H1 (cell line): ENCODE measurements at regions of chr16 and their contacts with region 1.

Region 1: DNA sequence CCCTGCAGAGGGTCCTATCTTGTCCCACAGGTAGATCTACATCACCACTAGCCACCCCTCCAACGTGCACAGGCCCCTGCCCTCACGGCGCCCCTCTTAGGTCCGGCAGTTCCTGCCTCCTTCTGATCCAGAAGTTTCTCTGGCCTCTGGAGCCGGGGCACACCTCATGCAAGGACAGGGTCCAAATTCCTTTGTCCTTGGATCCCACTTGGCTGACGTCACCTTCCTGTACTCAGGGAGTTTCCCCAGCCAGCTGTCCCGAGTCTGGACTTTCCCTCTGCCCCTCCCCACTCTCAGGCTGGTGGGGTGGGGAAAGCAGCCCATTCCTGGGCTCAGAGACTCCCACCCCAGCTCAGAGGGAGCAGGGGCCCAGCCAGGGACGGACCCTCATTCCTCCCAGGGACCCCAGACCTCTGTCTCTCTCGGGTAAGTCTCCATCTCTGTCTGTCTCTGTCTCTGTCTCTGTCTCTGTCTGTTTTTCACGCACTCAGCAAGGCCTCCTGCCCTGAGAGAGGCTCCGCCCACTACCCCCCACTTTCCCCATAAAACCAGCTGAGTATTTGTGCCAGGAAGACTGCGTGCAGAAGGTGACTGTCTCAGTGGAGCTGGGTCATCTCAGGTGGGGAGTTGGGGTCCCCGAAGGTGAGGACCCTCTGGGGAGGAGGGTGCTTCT is at the start of gene IL32:
- DNase-seq: no peak
- H3K4me3 ChIP-seq: no peak within 1 kb of the TSS
- H3K27ac ChIP-seq: peak within 1 kb of the TSS; percentile 23; the same call in 1 of the 2 replicates
- H3K4me1 ChIP-seq: peaks cover 0 to 3% (median 1%) of the 10 kb centered on the region in 4 experiments; a peak in 2 of 7 replicates
- H3K27me3 ChIP-seq: no peaks in the 10 kb centered on the region
- CTCF ChIP-seq: no peak
- EP300 ChIP-seq: no peak
- POLR2A ChIP-seq: no peak
- RAD21 ChIP-seq: no peak
- total RNA-seq, gene IL32: 2.0 and 2.7 TPM in 2 replicates

Region 2: GRCh38 chr16:2968738-2969544 is 96.3 kb before region 1 on chr16 and contains the start of gene PAQR4:
- CTCF ChIA-PET with region 1: no interaction called
- POLR2A ChIA-PET with region 1: no interaction called
- DNase-seq: peak in 1 of 2 experiments; percentile 95
- H3K4me3 ChIP-seq: peak within 1 kb of the TSS; percentile 74 to 94 (median 80)
- H3K27ac ChIP-seq: peak within 1 kb of the TSS; percentile 48; the same call in 1 of the 2 replicates
- H3K4me1 ChIP-seq: peaks cover 0 to 31% (median 15%) of the 10 kb centered on the region in 4 experiments; a peak in 6 of 7 replicates
- H3K27me3 ChIP-seq: peaks cover 15 to 32% (median 23%) of the 10 kb centered on the region in 4 experiments; a peak in 6 of 7 replicates
- CTCF ChIP-seq: no peak
- EP300 ChIP-seq: peak in 1 of 2 experiments; percentile 16; a peak in 1 of 3 replicates
- POLR2A ChIP-seq: peak in 1 of 2 experiments; percentile 59; a peak in 2 of 3 replicates
- RAD21 ChIP-seq: no peak
- total RNA-seq, gene PAQR4: 28.2 and 28.8 TPM in 2 replicates

Region 3: GRCh38 chr16:3045357-3045728 is 19.9 kb before region 1 on chr16:
- CTCF ChIA-PET with region 1: interaction called, 25 read pairs
- POLR2A ChIA-PET with region 1: interaction called, 13 read pairs
- DNase-seq: peak in 1 of 2 experiments; percentile 73
- H3K4me3 ChIP-seq: peak overlapping the region; percentile 66 to 89 (median 80)
- H3K27ac ChIP-seq: no peak overlapping the region; the same call in 1 of the 2 replicates
- H3K4me1 ChIP-seq: peaks cover 0 to 3% (median 0%) of the 10 kb centered on the region in 4 experiments; a peak in 3 of 7 replicates
- H3K27me3 ChIP-seq: peaks cover 0 to 8% (median 3%) of the 10 kb centered on the region in 4 experiments; a peak in 6 of 7 replicates
- CTCF ChIP-seq: no peak
- EP300 ChIP-seq: no peak
- POLR2A ChIP-seq: no peak
- RAD21 ChIP-seq: no peak